ENCODE measurements at regions of chr7 and their contacts with region 1.

Region 1: DNA sequence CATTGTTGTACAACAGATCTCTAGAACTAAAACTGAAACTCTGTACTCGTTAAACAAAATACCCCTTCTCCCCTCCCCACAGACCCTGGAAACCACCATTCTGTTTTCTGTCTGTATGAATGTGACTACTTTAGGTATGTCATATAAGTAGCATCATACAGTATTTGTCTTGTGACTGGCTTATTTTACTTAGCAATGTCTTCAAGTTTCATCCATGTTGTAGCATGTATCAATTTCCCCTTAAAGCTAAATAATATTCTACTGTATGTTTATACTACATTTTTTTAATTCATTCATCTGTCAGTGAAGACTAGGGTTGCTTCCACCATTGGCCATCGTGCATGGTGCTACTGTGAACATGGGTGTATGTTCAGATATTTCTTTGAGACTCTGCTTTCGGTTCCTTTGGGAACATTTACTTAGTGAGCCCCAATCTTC is 71.2 kb upstream of the RPA3 start:
- DNase-seq: no peak
- H3K4me3 Mint-ChIP-seq: no peak overlapping the region
- H3K27ac Mint-ChIP-seq: no peak overlapping the region
- H3K4me1 Mint-ChIP-seq: no peaks in the 10 kb centered on the region
- H3K27me3 Mint-ChIP-seq: no peaks in the 10 kb centered on the region
- CTCF ChIP-seq: no peak

Region 2: DNA sequence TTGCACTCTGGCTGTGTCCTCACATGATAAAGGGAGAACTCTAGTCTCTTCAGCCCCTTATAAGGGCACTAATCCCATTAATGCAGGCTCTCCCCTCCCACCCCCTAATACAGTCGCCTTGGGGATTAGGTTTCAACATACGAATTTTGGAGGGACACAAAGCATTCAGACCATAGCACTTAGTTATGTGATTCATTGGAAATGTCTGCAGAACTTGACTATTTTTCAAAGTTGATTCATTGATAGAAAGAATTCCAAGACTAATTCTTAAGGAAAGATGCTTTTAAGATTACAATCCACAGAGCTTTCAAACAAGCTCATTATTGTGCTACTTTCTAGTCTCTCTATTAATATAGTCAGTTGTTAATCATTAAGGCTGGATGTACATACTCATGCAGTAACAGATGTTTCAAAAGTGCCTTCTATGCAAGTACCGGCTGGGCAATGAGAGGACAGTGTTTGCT is 14.2 kb after region 1 on chr7:
- CTCF ChIA-PET with region 1: interaction called, 10 read pairs
- intact Hi-C with region 1: no loop called
- DNase-seq: no peak
- H3K4me3 Mint-ChIP-seq: no peak overlapping the region
- H3K27ac Mint-ChIP-seq: no peak overlapping the region
- H3K4me1 Mint-ChIP-seq: peaks cover 13% of the 10 kb centered on the region
- H3K27me3 Mint-ChIP-seq: no peaks in the 10 kb centered on the region
- CTCF ChIP-seq: no peak

Region 3: GRCh38 chr7:7909376-7909775 is 119.8 kb after region 1 on chr7:
- CTCF ChIA-PET with region 1: no interaction called
- intact Hi-C with region 1: no loop called
- DNase-seq: no peak
- H3K4me3 Mint-ChIP-seq: no peak overlapping the region
- H3K27ac Mint-ChIP-seq: no peak overlapping the region
- H3K4me1 Mint-ChIP-seq: peaks cover 18% of the 10 kb centered on the region
- H3K27me3 Mint-ChIP-seq: no peaks in the 10 kb centered on the region
- CTCF ChIP-seq: no peak

Measured in Calu3 (cell line).